AG04449 (cell line): ENCODE measurements at regions of chr6 and their contacts with region 1.

Region 1: DNA sequence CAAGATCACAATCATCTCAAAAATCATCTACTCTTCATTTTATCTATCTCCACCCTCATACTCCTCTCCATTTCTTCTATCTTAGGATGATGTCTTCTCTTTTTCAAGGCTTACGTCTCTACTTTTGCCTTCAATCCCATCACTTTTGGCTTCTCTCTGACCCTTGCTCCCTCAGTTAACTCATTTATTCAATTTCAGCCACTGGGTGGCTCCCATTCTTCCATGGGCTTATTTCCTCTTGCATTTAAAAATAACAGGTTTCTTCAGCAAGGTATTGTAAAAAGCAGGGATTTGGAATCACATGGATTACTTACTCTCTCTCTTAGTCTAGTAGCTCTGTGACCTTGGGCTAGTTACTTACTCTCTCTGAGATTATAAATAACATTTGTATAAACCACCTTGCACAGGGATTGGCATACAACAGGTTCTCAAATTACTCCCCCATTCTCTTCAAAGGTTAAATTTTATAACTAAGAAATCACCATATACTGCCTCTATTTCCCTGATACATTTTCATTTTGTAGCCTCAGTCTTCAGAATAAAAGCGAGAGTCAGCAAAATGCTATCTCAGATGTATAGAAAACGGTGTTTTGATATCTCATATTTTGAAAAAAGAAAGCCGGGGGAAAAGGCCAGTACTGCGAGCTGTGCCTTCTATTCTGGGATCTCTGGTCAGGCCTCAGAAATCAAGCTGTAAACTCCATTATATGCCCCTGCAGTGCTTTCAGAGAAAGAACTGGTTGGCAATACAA is 5.5 kb downstream of the ZSCAN12 start:
- DNase-seq: no peak
- H3K4me3 ChIP-seq: no peak overlapping the region
- CTCF ChIP-seq: peak; percentile 8

Region 2: DNA sequence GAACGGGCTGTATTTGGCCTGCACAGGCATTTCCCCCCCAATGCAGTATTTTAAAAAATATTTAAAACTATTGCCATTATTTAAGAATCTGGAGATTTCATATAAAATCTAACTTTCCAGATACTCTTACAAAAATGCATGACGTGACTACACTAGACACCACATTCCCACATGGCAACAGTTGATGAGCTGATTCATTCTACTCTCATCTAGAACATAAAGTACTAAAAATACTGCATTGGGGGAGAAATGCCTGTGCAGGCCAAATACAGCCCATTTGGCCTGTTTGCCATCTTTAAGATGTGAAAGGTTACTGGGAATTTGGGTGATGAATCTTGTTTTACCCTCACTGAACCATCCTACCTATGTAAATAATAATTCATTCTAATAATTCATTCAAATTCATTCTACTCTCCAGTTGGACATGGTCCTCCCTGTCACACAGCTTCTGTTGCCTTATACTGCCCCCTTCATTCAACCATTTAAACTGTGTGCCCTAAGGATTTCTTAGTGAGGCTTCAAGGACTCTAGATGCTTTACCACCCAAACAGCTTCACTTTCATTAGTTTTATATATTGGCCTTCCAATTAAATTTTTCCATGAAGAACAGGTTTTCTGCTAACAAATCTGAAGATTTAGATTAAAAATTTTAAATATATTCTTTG is 276.6 kb before region 1 on chr6:
- CTCF ChIA-PET with region 1: no interaction called
- POLR2A ChIA-PET with region 1: no interaction called
- DNase-seq: no peak
- H3K4me3 ChIP-seq: no peak overlapping the region
- CTCF ChIP-seq: no peak

Region 3: DNA sequence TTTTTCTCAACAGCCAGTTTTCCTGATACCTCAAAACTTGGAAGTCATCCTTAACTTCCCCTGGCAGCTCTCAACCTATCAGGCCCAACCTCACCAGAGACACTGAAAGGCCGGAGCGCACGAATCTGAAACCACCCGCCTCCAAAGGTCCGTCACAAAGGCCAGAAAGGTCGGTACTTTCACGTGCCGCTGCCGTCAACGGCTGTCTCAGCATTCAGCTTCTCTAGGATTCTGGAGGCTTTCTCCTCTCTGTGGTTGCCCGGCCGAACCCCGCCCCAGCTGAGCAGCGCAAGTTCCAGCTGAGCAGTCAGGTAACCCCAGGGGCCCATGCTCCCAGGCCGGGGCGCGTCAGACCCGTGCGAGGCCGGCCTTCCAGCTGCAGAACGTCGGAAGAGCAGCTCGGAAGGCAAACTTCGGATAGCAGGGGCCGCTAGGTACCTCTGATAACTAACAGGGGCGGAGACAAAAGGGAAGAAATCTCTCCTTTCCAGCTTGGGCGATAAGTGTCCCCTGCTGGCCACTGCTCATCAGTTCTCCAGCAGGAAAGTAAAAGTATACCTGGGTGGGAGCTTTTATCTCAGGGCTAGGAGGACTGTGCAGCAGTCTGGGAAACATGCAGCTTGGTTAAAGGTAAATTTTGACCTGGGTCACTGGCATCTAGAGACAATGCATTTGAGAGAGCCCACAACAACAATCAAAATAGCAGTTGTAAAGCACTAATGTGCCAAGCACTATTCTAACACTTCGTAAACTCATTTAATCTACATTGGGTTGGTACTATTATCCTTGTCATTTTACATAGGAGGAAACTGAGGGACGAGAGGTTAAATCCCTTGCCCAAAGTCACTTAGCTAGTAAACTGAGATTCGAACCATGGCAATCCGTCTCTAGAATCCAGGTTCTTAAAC is 10.6 kb before region 1 on chr6:
- CTCF ChIA-PET with region 1: interaction called, 16 read pairs
- POLR2A ChIA-PET with region 1: no interaction called
- DNase-seq: no peak
- H3K4me3 ChIP-seq: peak overlapping the region; percentile 50
- CTCF ChIP-seq: peak; percentile 21

Region 4: DNA sequence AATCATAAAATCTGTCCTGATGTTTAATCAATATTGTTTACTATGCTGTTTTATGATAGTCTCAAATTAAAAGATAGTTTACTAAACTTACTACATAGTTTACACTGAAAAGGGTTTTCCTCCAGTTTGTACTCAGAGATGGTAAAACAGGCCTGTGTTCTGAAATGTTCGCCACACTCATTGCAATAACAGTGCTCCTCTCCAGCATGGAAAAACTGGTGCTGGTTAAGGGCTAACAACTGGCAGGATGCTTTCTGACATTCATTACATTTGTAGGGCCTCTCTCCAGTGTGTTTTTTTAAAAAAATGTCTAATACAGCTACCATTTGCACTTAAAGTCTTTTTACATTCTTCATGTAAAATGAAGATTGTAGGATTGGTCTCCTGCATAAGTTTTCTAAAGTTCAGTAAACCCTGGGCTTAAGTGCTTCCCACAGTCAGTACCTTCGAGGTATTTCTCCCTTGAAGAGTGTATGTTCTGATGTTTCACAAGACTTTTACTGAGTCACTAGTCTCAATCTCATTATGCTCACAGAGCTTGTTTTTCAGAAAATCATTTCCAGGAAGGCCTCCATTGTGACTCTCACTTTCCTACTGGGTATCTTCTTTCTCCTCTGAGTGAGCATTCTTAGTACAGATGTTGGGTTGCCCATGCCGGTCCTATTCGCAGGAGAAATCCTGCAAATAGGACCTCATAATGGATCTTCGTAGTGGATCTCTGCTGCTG is 14.2 kb after region 1 on chr6:
- CTCF ChIA-PET with region 1: no interaction called
- POLR2A ChIA-PET with region 1: no interaction called
- DNase-seq: no peak
- H3K4me3 ChIP-seq: no peak overlapping the region
- CTCF ChIP-seq: no peak